Activated naive CD4-positive, alpha-beta T cell treated with anti-CD3 and anti-CD28 coated beads, Interleukin-2, amount 10 ng/mL, durations not matched to agents 7 days and 5 days (primary cell): ENCODE measurements at regions of chr1 and their contacts with region 1.

Region 1: DNA sequence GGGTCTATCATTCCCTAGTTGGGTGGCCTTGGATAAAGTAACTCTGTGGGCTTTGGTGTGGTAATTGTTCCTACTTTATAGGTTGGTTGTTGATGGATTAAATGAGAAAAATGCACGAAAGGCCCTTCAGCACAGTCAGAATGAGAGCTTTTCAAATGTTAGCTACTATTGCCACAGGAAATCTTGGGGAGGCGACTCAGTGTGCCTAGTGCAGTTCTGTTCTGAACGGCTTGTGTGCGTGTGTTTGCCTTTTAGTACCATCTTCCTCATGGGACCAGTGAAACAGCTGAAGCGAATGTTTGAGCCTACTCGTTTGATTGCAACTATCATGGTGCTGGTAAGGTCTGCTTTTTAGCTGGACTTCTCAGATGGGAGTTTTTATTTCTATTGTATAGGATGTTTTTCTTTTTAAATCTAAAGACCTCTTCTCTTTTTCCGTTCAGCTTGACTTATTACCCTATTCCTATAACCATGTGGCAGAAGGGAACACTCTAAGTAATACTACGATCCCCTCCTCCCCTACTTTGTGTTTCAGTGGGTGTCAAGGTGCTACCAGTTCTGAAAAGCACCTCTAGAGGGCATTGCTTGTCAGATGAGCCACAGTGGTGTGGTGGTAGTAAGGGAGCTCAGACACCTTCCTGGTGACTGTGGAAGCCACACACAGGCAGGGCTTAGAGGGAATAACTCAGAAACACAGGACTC is 9.2 kb downstream of the SFT2D2 start:
- DNase-seq: peak; percentile 48
- H3K4me3 Mint-ChIP-seq: no peak overlapping the region
- H3K27ac Mint-ChIP-seq: no peak overlapping the region
- H3K4me1 Mint-ChIP-seq: peaks cover 53% of the 10 kb centered on the region
- H3K27me3 Mint-ChIP-seq: no peaks in the 10 kb centered on the region

Region 2: DNA sequence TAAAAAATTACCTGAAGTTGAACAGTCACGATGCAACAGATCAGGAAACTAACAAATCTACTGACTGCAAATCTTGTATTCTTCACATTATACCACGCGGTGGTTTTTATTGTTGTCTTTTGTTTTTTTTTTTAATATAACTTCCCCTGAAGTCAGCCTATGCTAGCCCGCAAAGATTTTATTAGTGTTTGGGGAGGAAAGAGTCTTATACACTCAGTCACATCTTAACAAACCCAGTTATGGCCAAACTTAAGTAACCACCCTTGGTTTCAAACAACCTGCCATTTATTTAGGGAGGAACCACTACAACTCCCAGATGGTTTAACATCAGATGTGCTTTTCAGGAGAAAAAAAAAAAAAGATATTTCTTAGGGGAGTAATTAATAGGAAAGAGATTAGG is 83.1 kb before region 1 on chr1:
- CTCF ChIA-PET with region 1: no interaction called
- DNase-seq: no peak
- H3K4me3 Mint-ChIP-seq: no peak overlapping the region
- H3K27ac Mint-ChIP-seq: no peak overlapping the region
- H3K4me1 Mint-ChIP-seq: peaks cover 6% of the 10 kb centered on the region
- H3K27me3 Mint-ChIP-seq: peaks cover 8% of the 10 kb centered on the region

Region 3: DNA sequence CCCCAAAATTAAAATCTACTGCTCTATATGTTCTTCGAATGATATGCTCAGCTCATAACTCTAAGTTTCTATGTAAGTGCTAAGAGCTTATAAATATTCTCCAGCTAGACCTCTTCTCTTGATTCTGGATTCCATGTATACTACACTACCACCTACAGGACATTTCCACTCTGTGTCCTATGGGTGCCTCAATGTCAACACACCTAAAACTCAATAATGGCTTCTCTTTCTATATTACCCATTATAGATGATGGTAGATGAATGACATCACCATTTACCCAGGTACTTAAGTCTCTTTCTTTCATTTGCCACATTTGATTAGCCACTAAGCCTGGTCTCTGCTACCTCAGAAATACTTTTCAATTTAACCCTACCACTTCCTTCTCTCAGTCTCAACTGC is 86.9 kb after region 1 on chr1:
- CTCF ChIA-PET with region 1: interaction called, 60 read pairs
- DNase-seq: no peak
- H3K4me3 Mint-ChIP-seq: no peak overlapping the region
- H3K27ac Mint-ChIP-seq: no peak overlapping the region
- H3K4me1 Mint-ChIP-seq: peaks cover 19% of the 10 kb centered on the region
- H3K27me3 Mint-ChIP-seq: no peaks in the 10 kb centered on the region

Region 4: GRCh38 chr1:168365719-168366479 is 130.9 kb after region 1 on chr1:
- CTCF ChIA-PET with region 1: interaction called, 26 read pairs
- DNase-seq: no peak
- H3K4me3 Mint-ChIP-seq: no peak overlapping the region
- H3K27ac Mint-ChIP-seq: no peak overlapping the region
- H3K4me1 Mint-ChIP-seq: peaks cover 9% of the 10 kb centered on the region
- H3K27me3 Mint-ChIP-seq: peaks cover 41% of the 10 kb centered on the region